Ovary (tissue), 10 donors: ENCODE measurements at regions of chr18 and their contacts with region 1.

Region 1: GRCh38 chr18:31983020-31983419 is 35.6 kb upstream of the RNF125 start:
- DNase-seq: no peak
- H3K4me3 ChIP-seq: no peak overlapping the region
- H3K27ac ChIP-seq: no peak overlapping the region
- H3K4me1 ChIP-seq: no peaks in the 10 kb centered on the region
- H3K27me3 ChIP-seq: no peaks in the 10 kb centered on the region
- CTCF ChIP-seq: no peak
- EP300 ChIP-seq: no peak
- POLR2A ChIP-seq: no peak

Region 2: DNA sequence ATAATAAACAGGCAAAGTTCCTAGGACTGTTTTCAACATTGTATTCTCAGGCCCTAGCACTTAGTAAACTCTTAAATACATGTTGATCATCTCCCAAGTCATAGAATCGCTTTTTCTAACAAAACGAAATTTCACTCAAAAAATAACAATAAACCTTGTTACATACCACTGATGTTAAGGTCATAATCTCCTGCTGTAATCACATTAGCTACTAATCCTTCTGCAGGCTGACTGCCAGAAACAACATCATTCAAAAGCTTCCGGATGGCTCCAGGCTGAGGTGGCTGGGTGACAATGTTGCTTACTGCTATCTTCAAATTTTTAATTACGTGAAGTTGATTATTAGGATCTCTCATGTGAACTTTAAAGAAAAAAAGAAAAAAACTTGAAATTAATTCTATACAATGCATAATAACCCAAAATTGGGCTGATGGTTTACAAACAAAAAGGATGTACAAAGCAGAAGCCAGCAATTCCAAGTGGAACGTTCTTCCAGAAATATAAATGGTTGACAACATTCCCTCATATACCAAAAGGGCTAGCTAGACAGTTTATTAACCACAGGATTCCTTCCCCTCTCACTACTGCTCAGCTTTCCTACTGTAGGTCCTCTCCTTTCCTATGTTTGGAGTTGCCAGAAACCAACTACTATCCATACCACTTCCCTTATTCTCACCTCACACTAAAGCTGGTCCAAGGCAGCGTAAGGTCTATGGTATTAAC is 51.7 kb before region 1 on chr18:
- intact Hi-C with region 1: loop called in 1 of 4 experiments (anchors 5 kb)
- DNase-seq: no peak
- H3K4me3 ChIP-seq: no peak overlapping the region
- H3K27ac ChIP-seq: no peak overlapping the region
- H3K4me1 ChIP-seq: peaks cover 2% of the 10 kb centered on the region
- H3K27me3 ChIP-seq: no peaks in the 10 kb centered on the region
- CTCF ChIP-seq: no peak
- EP300 ChIP-seq: no peak
- POLR2A ChIP-seq: no peak